OCI-LY7 (cell line): ENCODE measurements at regions of chr6 and their contacts with region 1.

Region 1: GRCh38 chr6:152295346-152295745 is 341.8 kb downstream of the SYNE1 start:
- DNase-seq: no peak
- H3K4me3 ChIP-seq: no peak overlapping the region
- H3K27ac ChIP-seq: no peak overlapping the region
- H3K4me1 ChIP-seq: peaks cover 43% of the 10 kb centered on the region
- CTCF ChIP-seq: no peak

Region 2: DNA sequence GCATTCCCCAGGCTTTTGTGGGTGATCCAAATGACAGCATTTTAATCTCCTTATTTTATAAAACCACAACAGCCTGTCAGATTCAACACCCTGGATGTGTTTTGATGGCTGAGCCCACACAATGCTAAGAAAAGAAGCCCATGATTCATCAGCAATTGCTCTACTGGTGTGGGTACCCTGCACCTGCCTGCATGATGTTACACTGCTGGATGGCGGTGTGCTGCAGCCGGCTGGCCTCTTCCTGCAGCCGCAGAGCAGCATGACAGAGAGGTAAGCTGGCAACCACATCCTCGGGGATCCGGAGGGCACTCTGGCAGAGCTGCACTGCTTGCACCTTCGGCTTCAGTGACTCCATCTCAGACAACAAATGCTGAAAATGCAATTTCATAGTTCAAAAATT is 14.3 kb after region 1 on chr6:
- CTCF ChIA-PET with region 1: interaction called, 4 read pairs
- POLR2A ChIA-PET with region 1: interaction called, 29 read pairs
- intact Hi-C with region 1: no loop called
- DNase-seq: no peak
- H3K4me3 ChIP-seq: no peak overlapping the region
- H3K27ac ChIP-seq: no peak overlapping the region
- H3K4me1 ChIP-seq: no peaks in the 10 kb centered on the region
- CTCF ChIP-seq: no peak

Region 3: GRCh38 chr6:152316024-152316423 is 20.7 kb after region 1 on chr6:
- CTCF ChIA-PET with region 1: no interaction called
- POLR2A ChIA-PET with region 1: interaction called, 29 read pairs
- intact Hi-C with region 1: no loop called
- DNase-seq: peak; percentile 20
- H3K4me3 ChIP-seq: no peak overlapping the region
- H3K27ac ChIP-seq: no peak overlapping the region
- H3K4me1 ChIP-seq: peaks cover 9% of the 10 kb centered on the region
- CTCF ChIP-seq: no peak